Endothelial cell of umbilical vein (primary cell): ENCODE measurements at regions of chr16 and their contacts with region 1.

Region 1: GRCh38 chr16:86563489-86564345 is 2.9 kb upstream of the FOXC2 start:
- DNase-seq: peak; percentile 92
- H3K4me3 ChIP-seq: peak overlapping the region; percentile 28 to 99 (median 39)
- H3K27ac ChIP-seq: peak overlapping the region; percentile 78
- H3K4me1 ChIP-seq: peaks cover 18% of the 10 kb centered on the region
- H3K27me3 ChIP-seq: no peaks in the 10 kb centered on the region
- CTCF ChIP-seq: peak; percentile 99 to 100
- POLR2A ChIP-seq: no peak

Region 2: DNA sequence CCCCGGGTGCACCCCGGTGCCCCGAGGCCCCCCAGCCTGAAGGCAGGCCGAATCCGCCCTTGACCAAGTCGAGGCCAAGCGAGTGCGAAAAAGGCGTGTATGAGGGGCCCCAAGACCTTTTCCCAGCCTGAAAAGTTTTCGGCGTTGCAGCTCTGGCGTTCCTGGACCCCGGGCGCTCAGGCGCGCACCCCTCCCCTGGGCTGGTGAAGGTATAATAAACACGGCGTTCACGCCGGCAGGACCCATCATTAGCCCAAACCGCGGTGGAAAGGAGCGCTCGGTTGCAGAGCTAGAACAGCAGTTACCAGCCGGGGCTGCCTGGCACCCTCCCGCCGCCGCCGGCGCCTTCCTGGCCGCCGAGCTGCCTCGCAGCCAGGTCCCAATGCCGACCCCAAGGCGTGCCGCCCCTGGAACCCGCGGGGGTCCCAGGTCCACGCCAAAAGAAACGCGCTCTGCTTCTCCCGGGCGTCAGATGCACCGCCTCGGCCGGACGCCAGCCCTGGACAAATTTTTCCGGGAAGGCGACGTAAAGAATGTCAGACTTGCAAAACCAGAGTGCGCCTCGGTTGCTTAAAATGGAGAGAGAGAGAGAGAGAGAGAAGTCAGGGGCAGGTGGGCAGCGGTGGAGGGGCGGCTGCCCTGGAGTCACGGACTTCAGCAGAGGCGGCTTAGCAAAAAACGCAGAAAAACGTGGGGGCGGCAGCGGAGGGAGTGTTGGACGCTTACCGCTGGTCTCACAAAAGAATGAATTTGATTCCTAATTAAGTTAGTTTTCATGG is 64.9 kb before region 1 on chr16:
- CTCF ChIA-PET with region 1: no interaction called
- POLR2A ChIA-PET with region 1: no interaction called
- dilution Hi-C with region 1: no loop called
- intact Hi-C with region 1: no loop called
- DNase-seq: no peak
- H3K4me3 ChIP-seq: no peak overlapping the region
- H3K27ac ChIP-seq: no peak overlapping the region
- H3K4me1 ChIP-seq: no peaks in the 10 kb centered on the region
- H3K27me3 ChIP-seq: peaks cover 90 to 95% of the 10 kb centered on the region in 2 experiments
- CTCF ChIP-seq: no peak
- POLR2A ChIP-seq: no peak

Region 3: DNA sequence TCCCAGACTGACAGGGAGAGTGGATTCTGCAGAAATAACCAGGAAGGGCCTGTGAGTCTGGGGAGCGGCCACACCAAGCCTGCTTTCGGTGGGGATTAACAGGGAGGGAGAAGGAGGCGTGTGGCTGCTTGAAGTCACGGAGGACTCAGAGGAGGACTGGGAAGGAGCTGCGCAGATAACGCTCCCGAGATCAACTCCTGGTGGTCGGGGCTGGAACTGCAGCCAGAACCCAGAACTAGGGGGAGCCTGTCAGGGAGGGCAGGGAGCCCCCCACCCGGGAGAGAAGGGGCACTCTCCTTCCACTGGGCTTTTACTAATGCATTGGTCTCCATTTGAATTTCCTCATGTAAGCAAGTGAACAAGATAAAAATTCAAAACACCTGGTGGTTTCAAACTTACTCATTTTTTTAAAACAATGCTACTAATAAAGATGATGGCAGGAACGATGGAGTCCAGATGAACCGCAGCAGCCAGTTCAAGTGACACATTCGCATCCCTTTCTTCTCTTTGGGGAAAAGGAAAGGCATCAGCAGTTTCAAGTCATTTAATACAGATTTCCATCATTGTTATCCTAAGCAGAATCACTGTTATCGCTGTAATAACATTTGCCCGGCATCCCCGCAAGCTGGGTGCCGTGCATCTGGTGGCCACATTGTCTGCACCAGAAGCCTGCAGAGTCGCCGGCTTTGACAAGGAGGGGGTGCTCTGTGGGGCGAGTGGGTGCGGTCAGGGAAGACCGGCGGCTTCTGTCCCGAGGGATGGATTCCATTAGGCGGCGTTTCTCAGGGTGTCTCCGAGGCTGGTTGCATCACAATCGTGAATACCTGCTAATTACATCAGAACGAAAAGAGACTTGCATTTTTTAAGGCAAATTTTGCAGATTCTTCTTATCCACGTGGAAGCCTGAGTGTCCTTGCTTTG is 197.7 kb after region 1 on chr16:
- CTCF ChIA-PET with region 1: interaction called, 11 read pairs
- POLR2A ChIA-PET with region 1: no interaction called
- dilution Hi-C with region 1: no loop called
- intact Hi-C with region 1: no loop called
- DNase-seq: peak; percentile 72
- H3K4me3 ChIP-seq: no peak overlapping the region
- H3K27ac ChIP-seq: no peak overlapping the region
- H3K4me1 ChIP-seq: peaks cover 13% of the 10 kb centered on the region
- H3K27me3 ChIP-seq: peaks cover 0 to 8% of the 10 kb centered on the region in 2 experiments
- CTCF ChIP-seq: peak; percentile 91 to 96
- POLR2A ChIP-seq: no peak

Region 4: GRCh38 chr16:86874141-86874540 is 310.4 kb after region 1 on chr16:
- CTCF ChIA-PET with region 1: interaction called, 81 read pairs
- POLR2A ChIA-PET with region 1: no interaction called
- dilution Hi-C with region 1: no loop called
- intact Hi-C with region 1: loop called (anchors 1 kb)
- DNase-seq: peak; percentile 60
- H3K4me3 ChIP-seq: no peak overlapping the region
- H3K27ac ChIP-seq: no peak overlapping the region
- H3K4me1 ChIP-seq: no peaks in the 10 kb centered on the region
- H3K27me3 ChIP-seq: no peaks in the 10 kb centered on the region
- CTCF ChIP-seq: peak; percentile 80 to 81
- POLR2A ChIP-seq: no peak

Region 5: DNA sequence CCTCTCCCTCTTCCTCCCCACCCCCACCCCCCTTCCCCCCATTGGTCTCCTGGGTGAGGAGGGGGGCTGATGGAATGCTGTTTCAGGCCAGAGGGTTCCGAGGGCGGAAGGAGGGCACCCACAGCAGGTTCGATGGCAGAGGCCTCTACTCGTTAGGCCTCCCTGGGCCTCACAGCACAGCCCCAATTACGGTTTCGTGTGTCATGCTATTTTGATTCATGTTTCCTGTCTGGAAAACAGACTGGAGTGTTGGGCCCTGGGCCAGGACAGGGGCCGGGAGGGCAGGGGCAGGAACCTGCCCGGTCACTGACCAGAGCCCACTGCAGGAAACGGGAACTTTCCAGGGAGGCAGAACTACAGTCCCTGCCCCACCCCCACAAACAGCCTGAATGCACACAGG is 615.3 kb after region 1 on chr16:
- CTCF ChIA-PET with region 1: interaction called, 4 read pairs
- POLR2A ChIA-PET with region 1: no interaction called
- dilution Hi-C with region 1: no loop called
- intact Hi-C with region 1: loop called (anchors 2 kb)
- DNase-seq: peak; percentile 97
- H3K4me3 ChIP-seq: no peak overlapping the region
- H3K27ac ChIP-seq: peak overlapping the region; percentile 77
- H3K4me1 ChIP-seq: peaks cover 24% of the 10 kb centered on the region
- H3K27me3 ChIP-seq: no peaks in the 10 kb centered on the region
- CTCF ChIP-seq: no peak
- POLR2A ChIP-seq: peak; percentile 45

Region 6: GRCh38 chr16:87278191-87279095 is 714.7 kb after region 1 on chr16:
- CTCF ChIA-PET with region 1: interaction called, 108 read pairs
- POLR2A ChIA-PET with region 1: no interaction called
- dilution Hi-C with region 1: no loop called
- intact Hi-C with region 1: loop called (anchors 1 kb)
- DNase-seq: peak; percentile 86
- H3K4me3 ChIP-seq: no peak overlapping the region
- H3K27ac ChIP-seq: no peak overlapping the region
- H3K4me1 ChIP-seq: peaks cover 4% of the 10 kb centered on the region
- H3K27me3 ChIP-seq: no peaks in the 10 kb centered on the region
- CTCF ChIP-seq: peak; percentile 92 to 94
- POLR2A ChIP-seq: no peak